ENCODE measurements at regions of chr9 and their contacts with region 1.

Region 1: DNA sequence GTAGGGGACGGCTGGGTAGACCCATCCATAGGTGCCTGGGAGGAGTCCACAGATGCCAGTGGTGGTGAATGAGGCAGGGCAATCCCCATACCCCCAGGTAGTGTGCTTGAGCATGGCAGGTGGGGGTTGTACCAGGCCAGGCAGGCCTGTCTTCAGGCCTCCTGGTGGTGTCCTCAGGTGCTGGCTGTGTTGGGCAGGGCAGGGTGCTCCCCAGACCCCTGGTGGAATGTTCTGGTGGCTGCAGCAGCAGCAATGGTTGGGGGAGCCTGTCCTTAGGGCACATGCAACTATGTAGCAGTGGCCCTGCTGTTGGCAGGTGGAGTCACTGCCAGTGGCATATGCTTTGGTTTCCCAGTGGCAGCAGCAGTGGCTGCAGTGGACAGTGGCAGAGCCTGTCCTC is 10.0 kb downstream of the ALG2 start:
- DNase-seq: no peak
- H3K4me3 ChIP-seq: no peak overlapping the region
- H3K4me3 Mint-ChIP-seq: no peak overlapping the region
- H3K27ac ChIP-seq: no peak overlapping the region
- H3K27ac Mint-ChIP-seq: peak overlapping the region in 1 of 7 donors; percentile 59
- H3K4me1 ChIP-seq: peaks cover 10 to 17% of the 10 kb centered on the region in 2 donors
- H3K4me1 Mint-ChIP-seq: peaks cover 30% of the 10 kb centered on the region
- H3K27me3 ChIP-seq: no peaks in the 10 kb centered on the region
- H3K27me3 Mint-ChIP-seq: peaks cover 0 to 4% (median 1%) of the 10 kb centered on the region in 3 donors
- CTCF ChIP-seq: no peak

Region 2: GRCh38 chr9:99244344-99245260 is 32.9 kb after region 1 on chr9:
- intact Hi-C with region 1: no loop called
- DNase-seq: peak in 1 of 3 donors; percentile 14
- H3K4me3 ChIP-seq: no peak overlapping the region
- H3K4me3 Mint-ChIP-seq: peak overlapping the region in 1 of 2 donors; percentile 54
- H3K27ac ChIP-seq: peak overlapping the region in 1 of 2 donors; percentile 0
- H3K27ac Mint-ChIP-seq: peak overlapping the region in 6 of 7 donors; percentile 68 to 91 (median 79)
- H3K4me1 ChIP-seq: peaks cover 12 to 16% of the 10 kb centered on the region in 2 donors
- H3K4me1 Mint-ChIP-seq: peaks cover 18% of the 10 kb centered on the region
- H3K27me3 ChIP-seq: no peaks in the 10 kb centered on the region
- H3K27me3 Mint-ChIP-seq: peaks cover 0 to 1% (median 0%) of the 10 kb centered on the region in 3 donors
- CTCF ChIP-seq: no peak

Region 3: GRCh38 chr9:100098887-100099721 is 887.4 kb after region 1 on chr9 and contains the starts of genes ERP44 and INVS:
- intact Hi-C with region 1: loop called in 1 of 2 experiments (anchors 10 kb)
- DNase-seq: peak; percentile 98 to 99 (median 98)
- H3K4me3 ChIP-seq: peak within 1 kb of the TSS; percentile 83 to 97 (median 96)
- H3K4me3 Mint-ChIP-seq: peak within 1 kb of the TSS; percentile 100
- H3K27ac ChIP-seq: peak within 1 kb of the TSS; percentile 99 to 100
- H3K27ac Mint-ChIP-seq: peak within 1 kb of the TSS; percentile 100
- H3K4me1 ChIP-seq: peaks cover 16 to 24% of the 10 kb centered on the region in 2 donors
- H3K4me1 Mint-ChIP-seq: peaks cover 30% of the 10 kb centered on the region
- H3K27me3 ChIP-seq: no peaks in the 10 kb centered on the region
- H3K27me3 Mint-ChIP-seq: peaks cover 0 to 2% (median 0%) of the 10 kb centered on the region in 3 donors
- CTCF ChIP-seq: no peak
- polyA plus RNA-seq, gene ERP44: 18.4 to 74.0 (median 66.3) TPM
- polyA plus RNA-seq, gene INVS: 2.9 to 6.7 (median 4.2) TPM

Measured in CD14-positive monocyte (primary cell).